ENCODE measurements at regions of chr17 and their contacts with region 1.

Region 1: DNA sequence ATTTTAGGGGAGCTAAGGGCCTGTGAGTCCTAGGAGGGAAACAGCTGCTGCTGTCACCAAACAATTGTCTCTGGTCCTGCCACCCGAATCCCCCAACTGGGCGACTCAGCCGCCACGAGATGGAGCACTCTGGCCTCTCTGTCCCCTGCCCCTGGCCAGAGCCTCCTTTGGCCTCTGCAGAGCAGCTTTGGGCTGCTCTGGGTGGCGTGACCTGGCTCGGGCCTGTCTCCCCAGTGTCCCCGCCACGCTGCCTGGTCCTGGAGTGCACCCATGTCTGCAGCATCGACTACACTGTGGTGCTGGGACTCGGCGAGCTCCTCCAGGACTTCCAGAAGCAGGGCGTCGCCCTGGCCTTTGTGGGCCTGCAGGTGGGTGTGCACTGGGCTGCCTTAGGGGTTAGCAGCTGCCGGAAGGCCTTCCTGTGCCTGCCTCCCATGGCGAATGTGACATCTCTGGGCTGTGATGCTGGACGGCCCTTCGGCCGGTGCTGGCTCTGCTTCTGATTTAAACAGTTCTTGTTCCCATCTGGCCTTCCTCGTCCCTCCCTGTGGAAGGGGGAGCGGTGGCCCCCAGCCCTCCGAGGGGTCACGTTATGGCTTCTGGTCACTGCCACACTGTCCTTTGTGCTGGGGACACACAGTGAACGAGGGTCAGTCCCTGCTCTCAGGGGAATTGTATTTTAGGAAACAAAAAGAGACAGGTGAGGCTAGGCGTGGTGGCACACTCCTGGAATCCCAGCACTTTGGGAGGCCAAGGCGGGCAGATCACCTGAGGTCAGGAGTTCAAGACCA is 11.5 kb upstream of the RNF213 start:
- DNase-seq: no peak
- H3K4me3 ChIP-seq: no peak overlapping the region
- H3K27ac ChIP-seq: no peak overlapping the region
- H3K4me1 ChIP-seq: peaks cover 3% of the 10 kb centered on the region
- H3K27me3 ChIP-seq: no peaks in the 10 kb centered on the region
- CTCF ChIP-seq: no peak

Region 2: DNA sequence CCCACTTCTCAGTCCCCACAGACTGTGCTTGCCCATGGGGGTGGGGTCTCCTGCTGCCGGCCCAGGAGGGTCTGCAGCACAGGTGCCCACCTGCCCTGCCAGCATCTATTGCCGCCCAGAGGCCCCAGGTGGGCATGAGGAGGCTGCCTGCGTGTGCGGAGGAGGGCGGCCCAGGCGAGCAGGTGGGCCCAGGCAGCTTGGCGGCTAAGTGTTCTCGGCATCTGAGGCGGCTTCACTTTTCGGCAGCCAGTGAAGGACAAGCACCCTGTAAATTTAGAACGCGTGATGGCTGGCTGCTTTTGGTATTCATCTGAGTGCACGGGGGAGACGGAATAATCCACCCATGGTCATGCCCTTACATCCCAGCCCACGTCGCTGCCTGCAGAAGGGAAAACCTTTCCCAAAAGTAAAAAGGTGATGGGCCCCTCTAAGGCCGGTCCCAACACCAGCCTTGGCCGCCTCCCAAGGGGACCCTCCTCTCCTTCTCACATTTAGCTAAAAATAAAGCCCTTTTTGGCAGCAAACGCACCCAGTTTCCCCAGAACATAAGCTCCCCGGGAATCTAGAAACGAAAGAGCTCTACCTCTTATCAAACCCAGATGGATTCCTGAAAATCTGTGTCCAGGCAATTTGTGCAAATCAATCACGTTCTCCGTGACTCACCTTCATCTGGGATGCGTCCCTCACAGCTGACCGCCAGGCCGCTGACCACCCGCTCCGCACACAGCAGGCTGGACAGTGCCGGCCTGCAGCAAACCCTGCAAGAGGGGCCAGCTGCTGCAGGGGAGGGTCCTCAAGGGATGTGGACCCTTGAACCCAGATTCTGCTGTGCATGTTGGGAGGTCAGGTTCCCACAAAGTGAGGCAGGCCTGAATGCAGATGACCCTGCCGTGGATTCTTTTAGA is 717.7 kb before region 1 on chr17:
- CTCF ChIA-PET with region 1: no interaction called
- dilution Hi-C with region 1: no loop called
- in situ Hi-C with region 1: no loop called
- intact Hi-C with region 1: no loop called
- DNase-seq: no peak
- H3K4me3 ChIP-seq: no peak overlapping the region
- H3K27ac ChIP-seq: no peak overlapping the region
- H3K4me1 ChIP-seq: no peaks in the 10 kb centered on the region
- H3K27me3 ChIP-seq: no peaks in the 10 kb centered on the region
- CTCF ChIP-seq: no peak

Region 3: GRCh38 chr17:80307994-80308691 is 59.0 kb after region 1 on chr17:
- CTCF ChIA-PET with region 1: no interaction called
- dilution Hi-C with region 1: no loop called
- in situ Hi-C with region 1: no loop called
- intact Hi-C with region 1: no loop called
- DNase-seq: no peak
- H3K4me3 ChIP-seq: no peak overlapping the region
- H3K27ac ChIP-seq: no peak overlapping the region
- H3K4me1 ChIP-seq: no peaks in the 10 kb centered on the region
- H3K27me3 ChIP-seq: no peaks in the 10 kb centered on the region
- CTCF ChIP-seq: no peak

Region 4: DNA sequence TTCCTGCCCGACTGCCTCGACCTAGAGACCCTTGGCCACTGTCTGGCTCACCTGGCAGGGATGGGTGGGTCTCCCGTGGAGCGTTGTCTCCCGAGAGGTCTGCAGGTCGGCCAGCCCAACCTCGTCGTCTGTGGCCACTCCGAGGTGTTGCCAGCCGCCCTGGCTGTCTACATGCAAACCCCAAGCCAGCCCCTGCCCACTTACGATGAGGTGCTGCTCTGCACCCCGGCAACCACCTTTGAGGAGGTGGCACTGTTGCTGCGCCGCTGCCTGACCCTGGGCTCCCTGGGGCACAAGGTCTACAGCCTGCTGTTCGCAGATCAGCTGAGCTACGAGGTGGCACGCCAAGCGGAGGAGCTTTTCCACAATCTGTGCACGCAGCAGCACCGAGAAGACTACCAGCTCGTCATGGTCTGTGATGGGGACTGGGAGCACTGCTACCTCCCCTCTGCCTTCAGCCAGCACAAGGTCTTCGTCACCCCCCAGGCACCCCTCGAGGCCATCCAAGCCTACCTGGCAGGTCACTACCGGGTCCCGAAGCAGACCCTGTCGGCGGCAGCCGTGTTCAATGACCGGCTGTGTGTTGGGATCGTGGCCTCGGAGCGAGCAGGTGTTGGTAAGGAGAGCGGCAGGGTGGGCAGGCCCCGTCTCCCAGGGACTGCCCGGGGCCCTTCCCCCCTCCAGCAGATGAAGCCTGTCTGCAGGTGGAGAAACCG is 90.8 kb after region 1 on chr17:
- CTCF ChIA-PET with region 1: no interaction called
- dilution Hi-C with region 1: loop called (anchors 5 kb)
- in situ Hi-C with region 1: no loop called
- intact Hi-C with region 1: no loop called
- DNase-seq: no peak
- H3K4me3 ChIP-seq: no peak overlapping the region
- H3K27ac ChIP-seq: no peak overlapping the region
- H3K4me1 ChIP-seq: no peaks in the 10 kb centered on the region
- H3K27me3 ChIP-seq: no peaks in the 10 kb centered on the region
- CTCF ChIP-seq: no peak